ENCODE measurements at regions of chr15 and their contacts with region 1.

Region 1: GRCh38 chr15:60326824-60327654 is 70.7 kb downstream of the ANXA2 start:
- DNase-seq: peak; percentile 54
- H3K4me3 Mint-ChIP-seq: no peak overlapping the region
- H3K27ac Mint-ChIP-seq: no peak overlapping the region
- H3K4me1 Mint-ChIP-seq: no peaks in the 10 kb centered on the region
- H3K27me3 Mint-ChIP-seq: peaks cover 64% of the 10 kb centered on the region
- CTCF ChIP-seq: peak; percentile 87

Region 2: DNA sequence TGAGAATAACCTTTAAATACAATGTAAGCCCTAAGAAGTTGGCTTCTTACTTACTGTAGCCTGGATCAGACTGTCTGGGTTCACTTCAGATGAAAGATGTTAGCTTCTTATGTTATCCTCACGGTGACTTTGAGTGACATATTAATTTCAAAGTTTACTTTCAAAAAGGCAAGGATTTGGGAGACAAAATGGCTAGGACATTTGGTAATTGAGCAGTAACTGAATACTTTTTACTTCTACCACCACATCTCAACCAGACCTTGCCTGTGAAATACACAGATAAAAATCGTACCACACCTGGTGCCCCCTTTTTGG is 601.9 kb before region 1 on chr15:
- CTCF ChIA-PET with region 1: interaction called, 20 read pairs
- intact Hi-C with region 1: loop called (anchors 1 kb)
- DNase-seq: no peak
- H3K4me3 Mint-ChIP-seq: no peak overlapping the region
- H3K27ac Mint-ChIP-seq: no peak overlapping the region
- H3K4me1 Mint-ChIP-seq: no peaks in the 10 kb centered on the region
- H3K27me3 Mint-ChIP-seq: peaks cover 34% of the 10 kb centered on the region
- CTCF ChIP-seq: peak; percentile 1

Region 3: DNA sequence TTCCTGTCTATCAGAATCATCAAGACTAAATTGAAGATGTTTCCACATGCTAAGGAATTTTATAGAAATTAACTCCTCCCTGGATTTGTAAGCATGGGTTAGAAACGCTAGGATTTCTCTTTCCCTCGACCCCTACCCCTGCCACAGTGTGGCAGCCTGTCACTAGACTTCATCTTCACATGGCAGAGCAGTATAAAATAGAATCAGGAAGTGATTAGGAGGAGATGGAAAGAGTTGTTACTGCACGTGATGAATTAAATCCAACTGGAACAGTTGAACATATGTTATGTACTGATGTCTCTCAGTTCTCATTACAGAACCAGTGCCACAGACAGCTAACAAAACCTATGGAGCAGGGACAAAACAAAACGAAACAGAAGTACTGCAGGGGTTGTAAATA is 507.9 kb before region 1 on chr15:
- CTCF ChIA-PET with region 1: no interaction called
- intact Hi-C with region 1: loop called (anchors 2 kb)
- DNase-seq: peak; percentile 15
- H3K4me3 Mint-ChIP-seq: peak overlapping the region; percentile 28
- H3K27ac Mint-ChIP-seq: no peak overlapping the region
- H3K4me1 Mint-ChIP-seq: no peaks in the 10 kb centered on the region
- H3K27me3 Mint-ChIP-seq: peaks cover 36% of the 10 kb centered on the region
- CTCF ChIP-seq: no peak

Region 4: DNA sequence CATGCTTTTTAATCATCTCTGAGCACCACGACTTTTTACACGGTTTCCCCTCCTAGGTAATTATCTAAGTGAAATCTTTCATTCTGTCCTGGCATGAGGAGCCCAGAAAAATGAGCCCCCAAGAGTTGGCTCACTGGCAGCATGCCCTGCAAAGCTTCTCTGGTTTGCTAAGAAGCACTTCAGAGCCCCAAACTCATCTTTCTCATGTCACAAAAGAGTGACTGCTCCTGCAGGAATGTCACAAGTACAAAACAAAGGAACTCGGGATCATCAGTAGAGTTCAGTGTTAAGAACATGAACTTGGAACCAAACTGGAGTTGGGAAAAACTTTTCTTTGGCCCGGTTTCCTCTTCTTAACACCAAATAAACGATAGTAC is 199.1 kb before region 1 on chr15:
- CTCF ChIA-PET with region 1: interaction called, 3 read pairs
- intact Hi-C with region 1: loop called (anchors 5 kb)
- DNase-seq: no peak
- H3K4me3 Mint-ChIP-seq: peak overlapping the region; percentile 85
- H3K27ac Mint-ChIP-seq: peak overlapping the region; percentile 73
- H3K4me1 Mint-ChIP-seq: peaks cover 24% of the 10 kb centered on the region
- H3K27me3 Mint-ChIP-seq: peaks cover 15% of the 10 kb centered on the region
- CTCF ChIP-seq: no peak

Region 5: GRCh38 chr15:60152386-60152785 is 174.7 kb before region 1 on chr15:
- CTCF ChIA-PET with region 1: no interaction called
- intact Hi-C with region 1: loop called (anchors 5 kb)
- DNase-seq: no peak
- H3K4me3 Mint-ChIP-seq: no peak overlapping the region
- H3K27ac Mint-ChIP-seq: no peak overlapping the region
- H3K4me1 Mint-ChIP-seq: no peaks in the 10 kb centered on the region
- H3K27me3 Mint-ChIP-seq: peaks cover 53% of the 10 kb centered on the region
- CTCF ChIP-seq: no peak

Region 6: DNA sequence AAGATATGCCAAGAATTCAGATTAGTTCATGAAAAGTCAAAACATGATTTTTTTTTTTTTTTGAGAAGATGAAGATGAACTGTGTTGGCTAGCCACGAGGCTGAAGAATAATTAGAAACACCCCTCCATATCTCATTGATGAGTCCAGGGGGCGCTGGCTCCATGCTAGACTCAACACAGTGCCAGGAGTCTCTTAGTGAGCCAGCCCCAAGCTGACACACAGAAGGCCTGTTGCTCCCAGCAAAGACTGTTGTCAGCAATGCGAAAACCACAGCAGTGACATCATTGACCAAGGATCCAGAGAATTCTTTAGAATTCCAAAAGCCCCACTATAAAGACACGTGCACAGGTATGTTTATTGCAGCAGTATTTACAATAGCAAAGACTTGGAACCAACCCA is 114.5 kb before region 1 on chr15:
- CTCF ChIA-PET with region 1: no interaction called
- intact Hi-C with region 1: loop called (anchors 10 kb)
- DNase-seq: peak; percentile 10
- H3K4me3 Mint-ChIP-seq: no peak overlapping the region
- H3K27ac Mint-ChIP-seq: no peak overlapping the region
- H3K4me1 Mint-ChIP-seq: peaks cover 14% of the 10 kb centered on the region
- H3K27me3 Mint-ChIP-seq: peaks cover 90% of the 10 kb centered on the region
- CTCF ChIP-seq: no peak

Region 7: GRCh38 chr15:60520825-60521368 is 193.9 kb after region 1 on chr15:
- CTCF ChIA-PET with region 1: interaction called, 3 read pairs
- intact Hi-C with region 1: loop called (anchors 2 kb)
- DNase-seq: peak; percentile 82
- H3K4me3 Mint-ChIP-seq: peak overlapping the region; percentile 8
- H3K27ac Mint-ChIP-seq: peak overlapping the region; percentile 73
- H3K4me1 Mint-ChIP-seq: peaks cover 19% of the 10 kb centered on the region
- H3K27me3 Mint-ChIP-seq: no peaks in the 10 kb centered on the region
- CTCF ChIP-seq: peak; percentile 89

Region 8: DNA sequence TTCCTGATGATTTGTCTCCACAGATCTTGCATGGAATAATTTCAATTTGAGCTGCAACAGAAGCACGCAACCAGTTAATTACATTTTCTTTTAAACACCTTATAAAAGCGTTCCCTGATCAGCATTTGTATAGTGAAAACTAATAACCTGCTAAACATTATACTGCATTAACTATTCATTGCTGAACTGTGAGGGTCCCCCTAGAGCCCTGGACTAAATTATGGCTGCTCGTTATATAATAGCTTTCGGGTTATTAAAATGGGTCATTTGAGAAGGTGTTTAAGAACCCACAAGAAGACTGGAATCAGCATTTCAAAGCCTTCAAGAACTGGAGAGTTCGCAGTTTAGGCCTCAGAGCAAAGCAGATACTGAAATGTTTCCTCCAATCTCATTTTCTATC is 204.8 kb after region 1 on chr15:
- CTCF ChIA-PET with region 1: no interaction called
- intact Hi-C with region 1: no loop called
- DNase-seq: no peak
- H3K4me3 Mint-ChIP-seq: no peak overlapping the region
- H3K27ac Mint-ChIP-seq: no peak overlapping the region
- H3K4me1 Mint-ChIP-seq: peaks cover 13% of the 10 kb centered on the region
- H3K27me3 Mint-ChIP-seq: no peaks in the 10 kb centered on the region
- CTCF ChIP-seq: no peak